ENCODE measurements at regions of chr10 and their contacts with region 1.

Region 1: DNA sequence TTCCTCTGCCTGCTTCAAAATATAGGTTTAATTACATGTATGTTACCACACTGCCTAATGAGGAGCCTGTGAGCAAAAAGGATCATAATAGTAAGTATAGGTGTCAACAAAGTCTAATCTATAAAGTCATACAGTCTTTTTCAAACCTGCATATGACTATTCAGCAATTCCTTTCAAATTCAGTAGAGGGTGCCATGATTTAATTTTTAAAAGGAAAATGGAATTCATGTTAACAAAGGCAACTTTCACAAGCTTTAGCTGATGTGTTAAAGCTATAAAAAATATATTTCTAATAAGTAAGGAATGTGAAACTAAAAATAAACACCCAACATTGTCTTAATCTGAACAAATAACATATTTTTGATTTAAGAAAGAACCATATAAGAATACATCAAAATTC is 52.1 kb downstream of the MPP7 start:
- DNase-seq: no peak
- H3K4me3 ChIP-seq: no peak overlapping the region
- H3K27ac ChIP-seq: no peak overlapping the region
- H3K27me3 ChIP-seq: peaks cover 0 to 6% (median 0%) of the 10 kb centered on the region in 45 donors
- CTCF ChIP-seq: peak; percentile 48 to 90 (median 66)

Region 2: DNA sequence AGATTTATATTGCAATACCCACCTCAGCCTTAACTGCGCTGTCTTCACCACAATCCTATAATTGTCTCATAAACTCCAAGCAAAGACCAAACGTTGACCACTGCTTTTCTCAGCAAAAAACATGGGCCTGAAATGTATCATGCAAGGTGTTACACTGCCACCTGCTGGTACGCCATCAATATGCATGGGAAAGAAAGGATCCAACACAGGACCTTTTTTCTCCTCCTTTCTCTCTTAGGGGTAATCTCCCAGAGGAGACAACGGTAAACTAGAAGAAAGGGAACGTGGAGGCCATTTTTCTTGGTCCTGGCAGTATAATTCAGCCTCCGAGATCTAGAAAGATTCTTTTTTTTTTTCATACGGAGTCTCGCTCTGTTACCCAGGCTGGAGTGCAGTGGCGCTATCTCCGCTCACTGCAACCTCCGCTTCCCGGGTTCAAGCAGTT is 131.1 kb after region 1 on chr10:
- intact Hi-C with region 1: loop called (anchors 1 to 2 kb)
- DNase-seq: peak; percentile 44 to 91 (median 74)
- H3K4me3 ChIP-seq: no peak overlapping the region
- H3K27ac ChIP-seq: no peak overlapping the region
- H3K27me3 ChIP-seq: peaks cover 0 to 5% (median 0%) of the 10 kb centered on the region in 45 donors
- CTCF ChIP-seq: peak; percentile 94 to 100 (median 98)

Measured in dorsolateral prefrontal cortex (tissue), 120 donors.